ENCODE measurements at regions of chrX and their contacts with region 1.

Region 1: DNA sequence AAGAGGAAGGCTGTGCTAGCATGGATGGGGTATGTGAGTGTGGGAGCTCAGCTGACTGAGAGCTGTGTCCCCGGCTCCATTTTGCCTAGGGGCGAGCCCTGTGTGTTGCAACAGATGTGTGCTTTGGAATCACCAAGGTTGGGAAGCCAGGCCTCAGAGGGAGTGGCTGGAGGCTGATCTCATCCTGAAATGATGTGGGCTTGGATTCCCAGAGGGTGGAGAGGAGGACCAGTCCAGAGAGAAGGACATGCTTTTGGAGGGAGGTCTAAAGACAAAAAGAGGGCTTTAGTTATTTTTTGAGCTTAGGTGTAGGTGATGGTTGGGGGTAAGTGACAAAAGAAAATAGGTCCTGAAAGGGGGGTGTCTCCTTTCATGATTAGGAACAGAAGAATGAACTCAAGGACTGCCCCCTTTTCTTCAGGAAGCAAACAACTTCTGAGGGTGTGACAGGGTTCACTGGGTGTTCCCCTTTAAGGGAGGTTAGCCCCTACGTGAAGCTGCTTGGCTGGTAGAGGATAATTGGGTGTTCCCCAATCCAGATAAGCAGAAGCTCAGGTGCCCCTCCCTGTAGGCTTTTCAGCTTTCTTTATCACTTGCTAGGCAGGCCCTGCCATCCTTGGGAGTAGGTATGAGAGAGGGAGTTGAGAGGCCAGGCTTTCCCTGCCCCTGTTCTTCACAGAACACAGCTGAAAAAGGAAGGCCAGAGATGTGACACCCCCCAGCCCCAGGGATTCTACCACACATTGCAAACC is 44.0 kb downstream of the RTL9 start:
- DNase-seq: no peak

Region 2: GRCh38 chrX:110156167-110156754 is 246.4 kb before region 1 on chrX:
- CTCF ChIA-PET with region 1: interaction called, 166 read pairs
- POLR2A ChIA-PET with region 1: no interaction called
- DNase-seq: no peak

Region 3: DNA sequence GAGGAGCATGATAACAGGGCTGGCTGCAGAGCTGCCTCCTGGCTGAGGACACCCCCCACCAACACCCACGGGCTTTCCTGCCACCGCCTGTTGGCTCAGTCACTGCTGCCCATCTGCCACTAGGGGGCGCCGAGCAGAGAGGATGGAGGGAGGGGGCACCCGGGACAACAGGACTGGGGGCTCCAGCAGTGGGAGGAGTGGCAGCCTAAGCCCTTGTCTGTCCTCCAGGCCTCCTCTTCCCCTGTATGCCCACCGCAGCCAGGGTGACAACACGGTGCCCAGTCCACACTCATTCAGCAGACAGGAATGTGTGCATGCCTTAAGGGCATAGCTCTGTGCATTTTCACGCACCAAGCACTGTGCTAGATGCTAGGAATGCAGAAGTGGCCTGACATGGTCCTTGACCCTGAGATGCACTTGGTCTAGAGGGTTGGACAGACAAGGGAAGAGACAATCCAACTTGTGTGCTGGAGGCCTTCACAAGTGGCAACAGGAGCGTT is 234.7 kb before region 1 on chrX:
- CTCF ChIA-PET with region 1: interaction called, 93 read pairs
- POLR2A ChIA-PET with region 1: no interaction called
- DNase-seq: peak; percentile 80

Region 4: DNA sequence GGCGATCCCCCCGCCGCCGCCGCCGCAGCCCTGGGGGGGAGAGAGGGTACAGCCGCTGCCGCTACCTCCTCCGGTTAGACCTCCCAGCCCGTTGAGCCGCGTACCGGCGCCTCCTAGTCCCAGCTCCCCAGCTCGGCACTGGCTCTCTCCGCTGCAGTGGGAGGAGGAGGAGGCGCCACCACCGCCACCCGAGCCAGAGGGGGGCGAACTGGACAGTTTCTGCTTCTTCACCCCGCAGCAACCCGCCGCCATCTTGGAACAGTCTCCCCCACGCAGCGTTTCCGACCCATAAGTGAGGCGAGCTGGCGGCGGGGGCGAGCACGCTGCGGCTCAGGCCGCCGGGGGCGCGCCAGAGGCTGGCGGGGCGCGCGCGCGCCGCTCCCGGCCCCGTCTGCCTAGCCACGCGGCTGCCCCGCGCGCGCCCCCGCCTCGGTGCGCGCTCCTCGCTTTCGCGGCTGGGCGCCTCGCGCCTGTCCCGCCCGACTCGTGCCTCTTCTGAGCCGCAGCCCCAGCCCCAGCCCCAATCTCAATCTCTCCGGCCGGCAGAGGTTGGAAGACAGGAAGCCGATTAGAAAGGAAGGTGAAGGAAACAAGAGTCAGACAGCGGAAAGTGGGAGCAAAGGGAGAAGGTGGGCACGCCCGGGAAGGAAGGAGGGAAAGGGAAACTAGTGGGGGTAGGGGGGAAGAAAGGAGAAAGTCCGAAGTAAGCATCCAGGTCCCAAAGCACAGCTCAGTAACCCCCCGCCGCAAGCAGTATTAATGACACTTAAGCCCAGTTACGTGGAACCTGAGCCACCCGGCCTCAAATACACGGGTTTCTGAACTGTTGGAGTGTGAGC is 84.6 kb before region 1 on chrX and contains the start of gene AMMECR1:
- CTCF ChIA-PET with region 1: interaction called, 7 read pairs
- POLR2A ChIA-PET with region 1: interaction called, 13 read pairs
- DNase-seq: peak; percentile 84

Region 5: GRCh38 chrX:110412971-110413721 is 10.5 kb after region 1 on chrX:
- CTCF ChIA-PET with region 1: interaction called, 26 read pairs
- POLR2A ChIA-PET with region 1: interaction called, 3 read pairs
- DNase-seq: peak; percentile 93